Aorta (tissue), 5 donors: ENCODE measurements at regions of chr12 and their contacts with region 1.

Region 1: GRCh38 chr12:89461649-89462612 is 62.7 kb downstream of the GALNT4 start:
- DNase-seq: no peak
- ATAC-seq: peak; percentile 89
- H3K4me3 ChIP-seq: no peak overlapping the region
- H3K27ac ChIP-seq: no peak overlapping the region
- H3K4me1 ChIP-seq: no peaks in the 10 kb centered on the region
- H3K27me3 ChIP-seq: no peaks in the 10 kb centered on the region

Region 2: GRCh38 chr12:89019408-89020120 is 442.4 kb before region 1 on chr12:
- intact Hi-C with region 1: loop called in 1 of 2 experiments (anchors 10 kb)
- DNase-seq: peak; percentile 74
- ATAC-seq: peak; percentile 94
- H3K4me3 ChIP-seq: peak overlapping the region in 1 of 2 donors; percentile 8
- H3K27ac ChIP-seq: no peak overlapping the region
- H3K4me1 ChIP-seq: no peaks in the 10 kb centered on the region
- H3K27me3 ChIP-seq: no peaks in the 10 kb centered on the region

Region 3: DNA sequence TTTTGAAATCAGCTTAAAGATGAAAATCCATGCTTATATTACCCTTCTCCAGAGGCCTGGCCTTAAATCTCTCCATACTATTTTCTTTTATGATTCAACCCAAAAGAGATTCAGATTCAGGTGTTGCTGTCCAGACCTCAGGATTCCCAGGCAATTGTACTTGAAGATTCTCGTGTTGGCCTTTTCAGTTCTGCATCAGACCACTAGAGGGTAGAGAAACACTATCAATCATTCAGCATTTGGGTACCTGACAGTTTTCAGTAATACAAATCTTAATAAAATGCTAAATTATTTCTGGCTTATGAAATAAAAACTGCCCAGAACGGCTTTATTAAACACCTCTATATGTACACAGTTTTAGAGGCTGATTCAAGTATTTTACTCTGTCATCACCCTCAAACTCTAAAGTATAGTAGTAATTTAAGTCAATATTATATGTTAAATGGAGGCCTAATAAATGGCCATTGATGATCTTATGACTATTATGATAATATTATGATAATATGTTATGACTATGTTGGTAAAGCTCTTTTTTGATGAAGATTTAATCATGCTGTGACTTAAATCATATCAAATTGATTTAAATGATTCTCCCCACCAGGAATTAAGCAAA is 410.8 kb before region 1 on chr12:
- intact Hi-C with region 1: loop called (anchors 2 kb)
- DNase-seq: no peak
- ATAC-seq: no peak
- H3K4me3 ChIP-seq: no peak overlapping the region
- H3K27ac ChIP-seq: no peak overlapping the region
- H3K4me1 ChIP-seq: no peaks in the 10 kb centered on the region
- H3K27me3 ChIP-seq: no peaks in the 10 kb centered on the region

Region 4: DNA sequence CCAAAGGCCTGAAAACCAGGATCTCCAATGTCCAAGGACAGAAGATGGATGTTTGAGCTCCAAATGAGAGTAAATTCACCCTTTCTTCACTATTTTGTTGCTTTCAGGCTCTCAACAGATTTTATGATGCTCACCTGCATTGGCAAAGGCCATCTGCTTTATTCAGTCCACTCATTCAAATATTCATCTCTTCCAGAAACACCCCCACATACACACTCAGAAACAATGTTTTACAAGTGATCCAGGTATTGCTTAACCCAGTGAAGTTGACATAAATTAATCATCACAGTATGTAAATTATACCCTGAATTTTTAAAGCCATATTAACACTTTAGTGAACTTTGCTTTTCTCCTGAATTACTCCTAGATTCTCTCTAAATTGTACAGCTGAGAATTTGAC is 173.0 kb before region 1 on chr12:
- intact Hi-C with region 1: no loop called
- DNase-seq: no peak
- ATAC-seq: no peak
- H3K4me3 ChIP-seq: no peak overlapping the region
- H3K27ac ChIP-seq: no peak overlapping the region
- H3K4me1 ChIP-seq: peaks cover 0 to 2% of the 10 kb centered on the region in 2 donors
- H3K27me3 ChIP-seq: no peaks in the 10 kb centered on the region

Region 5: DNA sequence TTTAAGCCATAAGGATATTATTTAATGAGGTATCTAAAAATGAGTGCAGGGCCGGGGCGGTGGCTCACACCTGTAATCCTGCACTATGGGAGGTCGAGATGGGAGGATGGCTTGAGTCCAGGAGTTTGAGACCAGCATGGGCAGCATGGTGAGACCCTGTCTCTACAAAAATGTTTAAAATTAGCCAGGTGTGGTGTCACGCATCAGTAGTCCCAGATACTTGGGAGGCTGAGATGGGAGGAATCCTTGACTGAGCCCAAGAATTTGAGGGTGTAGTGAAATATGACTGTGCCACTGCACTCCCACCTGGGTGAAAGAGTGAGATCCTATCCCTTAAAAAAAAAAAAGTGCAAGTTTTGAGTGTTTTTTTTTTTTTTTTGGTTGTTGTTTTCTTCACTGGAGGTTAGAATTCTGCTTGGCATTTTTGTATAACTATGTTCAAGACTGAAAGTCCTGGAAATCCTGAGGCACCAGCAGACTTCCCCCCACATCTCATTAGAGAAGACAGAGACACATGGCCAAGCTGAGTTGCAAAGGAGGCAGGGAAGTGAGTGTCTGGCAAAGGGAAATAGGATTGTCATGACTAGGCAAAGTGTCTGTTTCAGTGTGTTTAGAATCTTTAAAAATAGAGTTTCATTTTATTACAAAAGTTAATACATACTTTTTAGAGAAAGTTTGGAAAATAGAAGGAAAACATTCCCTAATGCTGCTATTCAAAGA is 56.1 kb before region 1 on chr12:
- intact Hi-C with region 1: no loop called
- DNase-seq: no peak
- ATAC-seq: no peak
- H3K4me3 ChIP-seq: no peak overlapping the region
- H3K27ac ChIP-seq: no peak overlapping the region
- H3K4me1 ChIP-seq: no peaks in the 10 kb centered on the region
- H3K27me3 ChIP-seq: no peaks in the 10 kb centered on the region